Activated naive CD4-positive, alpha-beta T cell treated with anti-CD3 and anti-CD28 coated beads, Interleukin-2, amount 10 ng/mL, durations not matched to agents 7 days and 5 days (primary cell): ENCODE measurements at regions of chr19 and their contacts with region 1.

Region 1: GRCh38 chr19:2475702-2476450 is at the start of gene GADD45B:
- DNase-seq: peak; percentile 98
- H3K4me3 Mint-ChIP-seq: peak within 1 kb of the TSS; percentile 89
- H3K27ac Mint-ChIP-seq: peak within 1 kb of the TSS; percentile 92
- H3K4me1 Mint-ChIP-seq: peaks cover 35% of the 10 kb centered on the region
- H3K27me3 Mint-ChIP-seq: peaks cover 11% of the 10 kb centered on the region

Region 2: DNA sequence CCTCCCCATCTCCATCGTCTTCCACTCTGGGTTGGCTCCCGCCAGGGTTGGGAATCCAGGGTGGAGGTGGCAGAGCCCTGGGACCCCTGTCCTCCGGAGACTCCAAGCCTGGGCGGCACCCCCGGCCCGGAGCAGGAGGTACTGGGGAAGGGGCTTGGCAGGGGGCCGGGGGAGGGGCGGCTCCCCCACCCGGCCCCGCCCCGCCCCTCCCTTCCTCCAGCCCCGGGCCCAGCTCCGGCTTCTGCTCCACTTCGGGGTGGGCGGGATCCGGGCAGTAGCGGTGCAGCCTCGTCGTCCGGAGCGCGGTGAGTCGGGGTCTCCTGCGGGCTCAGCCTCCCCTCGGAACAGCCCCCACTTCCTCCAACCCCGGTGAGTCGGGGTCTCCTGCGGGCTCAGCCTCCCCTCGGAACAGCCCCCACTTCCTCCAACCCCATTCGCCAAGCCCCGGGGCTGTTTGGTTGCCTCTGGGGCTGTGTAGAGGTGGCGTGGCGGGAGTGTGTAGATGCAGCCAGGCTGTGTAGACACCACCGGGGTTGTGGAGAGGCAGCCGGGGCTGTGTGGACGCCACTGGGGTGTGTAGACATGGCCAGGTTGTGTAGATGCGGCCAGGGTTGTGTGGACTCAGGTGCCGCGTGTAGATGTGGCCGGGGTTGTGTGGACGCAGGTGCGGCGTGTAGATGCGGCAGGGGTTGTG is 115.7 kb before region 1 on chr19 and contains the start of gene TMPRSS9:
- CTCF ChIA-PET with region 1: no interaction called
- DNase-seq: no peak
- H3K4me3 Mint-ChIP-seq: no peak within 1 kb of the TSS
- H3K27ac Mint-ChIP-seq: no peak within 1 kb of the TSS
- H3K4me1 Mint-ChIP-seq: peaks cover 3% of the 10 kb centered on the region
- H3K27me3 Mint-ChIP-seq: peaks cover 41% of the 10 kb centered on the region

Region 3: DNA sequence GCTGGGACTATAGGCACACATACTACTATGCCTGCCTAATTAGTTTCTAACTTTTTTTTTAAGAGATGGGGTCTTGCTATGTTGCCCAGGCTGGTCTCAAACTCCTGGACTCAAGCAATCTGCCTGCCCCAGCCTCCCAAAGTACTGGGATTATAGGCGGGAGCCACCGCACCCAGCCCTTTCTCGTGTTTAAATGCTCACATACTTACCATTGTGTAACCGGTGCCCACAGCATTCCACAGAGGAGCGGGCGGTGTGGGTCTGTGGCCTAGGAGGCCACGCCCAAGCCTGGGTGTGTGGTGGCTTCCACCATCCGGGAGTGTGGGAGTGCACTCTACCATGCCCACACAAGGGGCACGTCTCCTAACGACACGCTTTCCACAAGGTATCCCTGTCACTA is 26.9 kb before region 1 on chr19:
- CTCF ChIA-PET with region 1: no interaction called
- DNase-seq: no peak
- H3K4me3 Mint-ChIP-seq: no peak overlapping the region
- H3K27ac Mint-ChIP-seq: no peak overlapping the region
- H3K4me1 Mint-ChIP-seq: peaks cover 23% of the 10 kb centered on the region
- H3K27me3 Mint-ChIP-seq: no peaks in the 10 kb centered on the region

Region 4: DNA sequence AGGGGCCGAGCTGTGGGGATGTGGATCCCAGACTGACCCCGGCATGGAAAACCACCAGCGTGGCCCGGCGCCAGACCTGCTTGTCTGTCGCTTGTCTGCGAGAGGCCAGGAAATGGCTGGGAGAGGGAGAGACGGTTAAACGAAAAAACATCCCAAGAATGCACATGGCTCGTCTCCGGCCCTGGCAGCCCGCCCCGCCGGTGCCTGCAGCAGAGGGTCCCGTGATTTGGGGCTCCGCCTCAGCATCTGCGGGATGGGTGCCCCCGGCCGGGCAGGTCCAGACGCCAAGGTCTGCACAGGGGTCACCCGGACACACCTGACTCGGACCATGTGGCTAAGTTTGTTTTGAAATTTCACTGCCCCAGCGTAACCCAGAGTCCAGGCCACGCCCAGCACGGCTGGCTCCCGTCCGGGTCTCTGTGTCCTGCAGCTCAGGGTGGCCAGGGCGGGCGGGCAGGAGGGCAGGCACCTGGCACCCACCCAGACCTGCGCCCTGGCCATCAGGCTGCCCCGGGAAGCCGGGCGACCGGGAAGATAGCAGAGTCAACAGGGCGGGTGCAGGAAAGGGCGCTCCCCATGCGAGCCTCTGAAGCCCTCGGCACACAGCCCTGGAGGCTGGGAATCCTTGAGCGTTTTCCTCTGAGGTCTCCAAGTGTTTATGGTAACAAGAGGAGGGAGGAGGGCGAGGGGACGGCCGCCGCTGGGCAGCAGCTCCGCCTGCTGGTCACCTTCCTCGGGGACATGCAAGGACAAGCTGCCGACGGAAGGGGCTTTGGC is 103.2 kb after region 1 on chr19:
- CTCF ChIA-PET with region 1: interaction called, 30 read pairs
- DNase-seq: peak; percentile 85
- H3K4me3 Mint-ChIP-seq: peak overlapping the region; percentile 33
- H3K27ac Mint-ChIP-seq: no peak overlapping the region
- H3K4me1 Mint-ChIP-seq: peaks cover 13% of the 10 kb centered on the region
- H3K27me3 Mint-ChIP-seq: peaks cover 48% of the 10 kb centered on the region

Region 5: DNA sequence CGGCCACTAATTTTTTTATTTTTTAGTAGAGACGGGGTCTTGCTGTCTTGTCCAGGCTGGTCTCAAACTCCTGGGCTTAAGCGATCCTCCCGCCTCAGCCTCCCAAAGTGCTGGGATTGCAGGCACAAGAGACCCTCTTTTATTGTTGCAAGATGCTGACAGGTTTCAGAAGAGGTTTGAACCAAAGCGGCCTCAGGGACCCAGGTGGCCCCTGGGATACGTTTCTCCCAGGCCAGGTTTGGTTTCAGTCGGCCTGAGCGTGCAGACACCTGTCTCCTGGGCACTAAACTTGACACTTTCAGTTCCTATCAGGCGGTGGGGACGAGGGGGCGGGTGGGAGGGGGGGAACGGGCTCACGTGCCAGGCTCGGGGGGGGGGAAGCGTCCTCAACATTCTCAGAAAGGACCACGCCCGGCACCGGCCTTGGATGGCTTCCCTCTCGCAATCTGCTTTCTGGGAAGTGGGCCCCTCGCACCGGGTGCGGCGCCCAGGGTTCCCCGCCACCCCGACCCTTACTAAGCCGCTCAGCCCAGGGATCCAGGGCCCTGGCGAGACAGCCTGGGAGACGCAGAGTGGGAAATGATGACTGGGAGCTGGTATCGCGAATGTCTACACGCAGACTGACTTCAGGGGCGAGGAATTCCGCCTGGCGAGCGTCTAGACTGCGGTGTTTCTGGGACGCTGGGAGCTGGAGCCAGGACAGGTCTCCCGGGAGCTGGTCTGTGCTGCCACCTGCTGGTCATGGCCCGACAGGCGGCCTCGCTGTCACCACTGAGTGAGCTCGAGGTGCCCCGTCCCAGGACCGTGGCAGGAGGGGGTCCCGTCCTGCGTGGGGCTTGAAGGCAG is 135.0 kb after region 1 on chr19:
- CTCF ChIA-PET with region 1: interaction called, 63 read pairs
- DNase-seq: peak; percentile 93
- H3K4me3 Mint-ChIP-seq: peak overlapping the region; percentile 79
- H3K27ac Mint-ChIP-seq: no peak overlapping the region
- H3K4me1 Mint-ChIP-seq: peaks cover 55% of the 10 kb centered on the region
- H3K27me3 Mint-ChIP-seq: peaks cover 61% of the 10 kb centered on the region

Region 6: DNA sequence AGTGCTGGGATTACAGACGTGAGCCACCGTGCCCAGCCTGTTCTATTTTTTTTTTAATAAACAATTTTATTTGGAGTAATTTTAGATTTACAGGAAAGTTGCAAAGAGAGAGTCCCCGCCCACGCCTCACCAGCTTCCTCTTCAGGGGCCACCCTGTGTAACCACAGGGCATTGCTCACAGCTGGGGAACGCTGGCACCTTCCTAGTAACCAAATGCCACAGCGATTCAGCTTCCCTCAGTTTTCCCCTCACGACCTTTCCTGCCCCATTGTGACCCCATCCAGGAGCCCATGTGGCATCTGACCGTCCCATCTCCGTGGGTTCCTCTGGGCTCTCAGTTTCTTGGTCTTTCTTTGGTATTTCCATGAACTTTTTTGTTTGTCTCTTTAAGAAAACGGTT is 142.7 kb after region 1 on chr19:
- CTCF ChIA-PET with region 1: interaction called, 16 read pairs
- DNase-seq: peak; percentile 72
- H3K4me3 Mint-ChIP-seq: peak overlapping the region; percentile 60
- H3K27ac Mint-ChIP-seq: peak overlapping the region; percentile 99
- H3K4me1 Mint-ChIP-seq: peaks cover 68% of the 10 kb centered on the region
- H3K27me3 Mint-ChIP-seq: peaks cover 13% of the 10 kb centered on the region